AG04449 (cell line): ENCODE measurements at regions of chr9 and their contacts with region 1.

Region 1: DNA sequence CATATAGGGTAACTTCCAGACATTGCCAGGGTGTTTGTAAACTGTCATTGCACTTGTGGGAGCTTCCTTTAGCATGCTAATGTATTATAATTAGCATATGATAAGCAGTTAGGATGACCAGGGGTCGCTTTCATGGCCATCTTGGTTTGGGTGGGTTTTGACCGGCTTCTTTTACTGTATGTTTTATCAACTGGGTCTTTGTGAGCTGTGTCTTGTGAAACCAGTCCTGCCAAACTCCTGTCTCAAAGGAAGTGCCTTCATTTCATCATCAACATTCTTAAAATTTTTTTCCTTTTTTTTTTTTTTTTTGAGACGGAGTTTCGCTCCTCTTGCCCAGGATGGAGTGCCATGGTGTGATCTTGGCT is 11.9 kb upstream of the MELK start:
- DNase-seq: no peak
- H3K4me3 ChIP-seq: no peak overlapping the region
- CTCF ChIP-seq: no peak

Region 2: GRCh38 chr9:36218411-36218901 is 342.4 kb before region 1 on chr9:
- CTCF ChIA-PET with region 1: no interaction called
- POLR2A ChIA-PET with region 1: no interaction called
- DNase-seq: no peak
- H3K4me3 ChIP-seq: no peak overlapping the region
- CTCF ChIP-seq: no peak

Region 3: DNA sequence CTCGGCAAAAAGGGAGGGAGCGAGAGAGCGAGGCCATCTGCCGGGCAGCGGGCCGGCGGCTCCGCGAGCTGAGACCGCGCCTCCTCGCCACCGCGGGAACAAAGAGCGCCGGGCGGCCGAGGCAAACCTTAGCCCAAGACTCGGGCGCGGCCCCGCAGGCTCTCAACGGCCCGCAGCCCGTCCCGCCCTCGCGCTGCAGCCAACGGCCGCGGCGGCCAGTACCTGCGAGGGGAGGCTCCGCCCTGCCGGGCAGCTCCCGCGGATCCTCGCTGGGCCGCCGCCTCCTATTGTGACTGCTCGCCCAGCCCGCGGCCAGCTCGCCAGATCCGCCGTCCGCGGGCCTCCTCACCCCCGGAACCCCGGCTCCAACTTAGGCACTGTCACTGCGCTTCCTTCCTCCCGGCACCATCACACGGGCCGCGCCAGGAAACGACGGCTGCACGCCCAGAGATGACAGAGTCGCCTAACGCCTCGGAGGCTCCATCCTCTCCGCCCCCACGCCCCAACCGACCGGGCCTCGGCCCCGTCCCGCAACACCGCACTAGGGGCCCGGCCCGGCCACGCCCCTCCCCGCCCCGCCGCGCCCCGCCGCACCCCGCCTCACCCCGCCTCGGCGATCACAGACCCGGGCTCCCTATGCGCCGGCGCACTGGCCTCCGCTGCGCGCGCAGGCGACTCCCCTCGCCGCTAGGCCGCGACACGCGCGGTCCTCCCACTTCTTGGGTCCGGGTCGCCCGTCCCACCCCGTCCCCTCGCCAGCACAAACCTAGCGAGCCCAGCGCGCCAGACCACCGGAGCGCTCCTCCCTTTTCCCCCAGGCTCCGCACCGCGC is 160.3 kb before region 1 on chr9:
- CTCF ChIA-PET with region 1: interaction called, 345 read pairs
- POLR2A ChIA-PET with region 1: no interaction called
- DNase-seq: no peak
- H3K4me3 ChIP-seq: peak overlapping the region; percentile 78
- CTCF ChIP-seq: no peak

Region 4: DNA sequence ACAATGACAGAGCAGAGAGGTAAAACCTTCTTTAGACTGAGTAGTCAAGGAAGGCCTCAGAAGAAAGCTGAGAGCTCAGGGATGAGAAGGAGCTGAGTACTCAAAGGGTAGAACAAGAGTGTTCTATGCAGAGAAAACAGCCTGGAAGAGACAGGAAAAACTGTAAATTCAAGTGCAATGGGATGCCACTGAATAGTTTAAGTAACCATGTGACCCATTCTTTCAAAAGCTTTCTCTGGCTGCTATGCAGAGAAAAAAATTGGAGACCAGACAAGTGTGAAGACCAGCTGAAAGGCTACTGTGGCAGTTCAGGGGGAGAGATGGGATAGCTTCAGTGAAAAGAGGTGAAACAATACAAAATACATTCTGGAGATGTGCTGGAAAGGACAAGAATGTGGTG is 99.5 kb before region 1 on chr9:
- CTCF ChIA-PET with region 1: interaction called, 12 read pairs
- POLR2A ChIA-PET with region 1: no interaction called
- DNase-seq: peak; percentile 5
- H3K4me3 ChIP-seq: no peak overlapping the region
- CTCF ChIP-seq: no peak

Region 5: GRCh38 chr9:36543916-36544315 is 16.9 kb before region 1 on chr9:
- CTCF ChIA-PET with region 1: interaction called, 14 read pairs
- POLR2A ChIA-PET with region 1: no interaction called
- DNase-seq: no peak
- H3K4me3 ChIP-seq: no peak overlapping the region
- CTCF ChIP-seq: no peak

Region 6: DNA sequence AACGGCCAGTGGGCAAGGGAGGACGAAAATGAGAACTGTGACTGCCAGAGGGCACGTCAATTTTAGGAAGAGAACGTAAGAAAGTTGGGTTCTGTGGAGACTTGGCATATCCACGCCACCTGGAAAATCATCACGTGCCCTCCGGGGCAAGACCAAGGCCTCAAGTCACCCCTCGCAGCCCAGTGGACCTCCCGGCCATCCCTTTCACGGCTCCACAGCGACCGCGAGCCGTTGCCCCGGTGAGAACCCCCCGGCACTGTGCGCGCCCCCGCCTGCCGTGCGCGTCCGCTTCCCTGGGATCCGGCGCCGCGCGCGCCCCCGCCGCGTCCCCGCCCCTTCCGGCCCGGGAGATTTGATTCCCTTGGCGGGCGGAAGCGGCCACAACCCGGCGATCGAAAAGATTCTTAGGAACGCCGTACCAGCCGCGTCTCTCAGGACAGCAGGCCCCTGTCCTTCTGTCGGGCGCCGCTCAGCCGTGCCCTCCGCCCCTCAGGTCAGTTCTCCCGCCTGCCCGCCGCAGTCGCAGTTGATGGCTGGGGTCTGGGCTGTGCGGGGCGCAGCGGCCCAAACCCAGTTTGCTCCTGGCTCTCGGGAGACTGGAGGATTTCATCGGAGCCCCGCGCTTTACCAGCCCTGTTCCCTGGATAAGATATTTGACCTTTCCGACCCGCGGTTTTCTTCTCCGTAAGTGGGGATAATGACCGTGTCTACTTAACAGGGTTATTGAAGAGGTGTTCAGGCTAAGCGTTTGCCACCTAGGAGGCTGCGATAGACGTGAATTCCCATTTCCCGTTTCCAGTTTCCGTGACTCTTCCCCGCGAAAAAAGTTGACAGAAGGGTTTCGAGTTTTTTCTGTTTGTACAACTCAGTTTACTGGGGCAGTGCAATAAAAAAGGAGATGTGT is 11.9 kb after region 1 on chr9 and contains the start of gene MELK:
- CTCF ChIA-PET with region 1: interaction called, 10 read pairs
- POLR2A ChIA-PET with region 1: no interaction called
- DNase-seq: no peak
- H3K4me3 ChIP-seq: peak within 1 kb of the TSS; percentile 92
- CTCF ChIP-seq: no peak

Region 7: DNA sequence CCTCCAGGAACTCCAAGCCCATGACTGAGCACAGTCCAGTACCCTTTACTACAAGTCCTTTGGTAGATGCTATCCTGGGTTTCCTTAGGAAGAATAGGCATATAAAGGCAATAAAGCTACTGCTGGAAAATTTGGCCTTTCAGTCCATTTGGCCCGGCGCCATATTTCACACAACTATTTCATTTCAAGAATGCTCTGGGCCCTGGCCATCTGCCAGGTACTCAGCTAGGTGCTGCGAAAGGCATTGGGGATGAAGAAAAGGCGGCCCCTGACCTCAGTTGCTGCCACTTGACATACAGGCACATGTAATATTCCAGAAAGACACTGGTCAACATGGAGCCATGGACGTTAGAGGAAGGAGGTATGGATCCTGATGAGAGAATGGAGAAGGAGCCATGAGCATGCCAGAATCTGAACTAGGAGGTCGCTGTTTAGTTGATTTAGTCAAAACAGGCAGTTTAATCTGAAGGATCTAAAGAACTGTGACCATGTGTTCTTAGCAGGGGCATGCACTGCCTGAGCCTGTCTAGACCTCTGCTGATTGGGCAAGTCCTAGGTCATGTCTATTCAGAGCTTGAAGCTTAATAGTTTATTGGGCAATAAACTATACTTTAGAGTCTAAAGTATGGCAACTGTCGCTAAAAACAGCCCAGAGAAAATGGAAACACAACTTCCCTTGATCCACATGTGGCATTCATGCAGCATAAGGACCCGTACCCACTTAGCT is 161.2 kb after region 1 on chr9:
- CTCF ChIA-PET with region 1: no interaction called
- POLR2A ChIA-PET with region 1: no interaction called
- DNase-seq: no peak
- H3K4me3 ChIP-seq: no peak overlapping the region
- CTCF ChIP-seq: no peak